CD4-positive, alpha-beta T cell (primary cell): ENCODE measurements at regions of chr9 and their contacts with region 1.

Region 1: GRCh38 chr9:37784616-37785483 is at the start of gene EXOSC3:
- DNase-seq: peak; percentile 73 to 93 (median 80)
- ATAC-seq: peak; percentile 91
- H3K4me3 ChIP-seq: peak within 1 kb of the TSS; percentile 94
- H3K4me3 Mint-ChIP-seq: peak within 1 kb of the TSS; percentile 98
- H3K27ac ChIP-seq: peak within 1 kb of the TSS; percentile 79 to 90
- H3K27ac Mint-ChIP-seq: peak within 1 kb of the TSS; percentile 95
- H3K4me1 ChIP-seq: peaks cover 23% of the 10 kb centered on the region
- H3K4me1 Mint-ChIP-seq: peaks cover 48% of the 10 kb centered on the region
- H3K27me3 ChIP-seq: no peaks in the 10 kb centered on the region
- H3K27me3 Mint-ChIP-seq: no peaks in the 10 kb centered on the region
- CTCF ChIP-seq: no peak
- total RNA-seq, gene EXOSC3: 42.9 to 44.2 TPM

Region 2: GRCh38 chr9:37119907-37120842 is 664.7 kb before region 1 on chr9 and contains the start of gene ZCCHC7:
- CTCF ChIA-PET with region 1: no interaction called
- POLR2A ChIA-PET with region 1: no interaction called
- intact Hi-C with region 1: no loop called
- DNase-seq: peak; percentile 95 to 98 (median 97)
- ATAC-seq: peak; percentile 95
- H3K4me3 ChIP-seq: peak within 1 kb of the TSS; percentile 79
- H3K4me3 Mint-ChIP-seq: peak within 1 kb of the TSS; percentile 95
- H3K27ac ChIP-seq: peak within 1 kb of the TSS; percentile 87 to 94
- H3K27ac Mint-ChIP-seq: peak within 1 kb of the TSS; percentile 92
- H3K4me1 ChIP-seq: peaks cover 21% of the 10 kb centered on the region
- H3K4me1 Mint-ChIP-seq: peaks cover 42% of the 10 kb centered on the region
- H3K27me3 ChIP-seq: no peaks in the 10 kb centered on the region
- H3K27me3 Mint-ChIP-seq: no peaks in the 10 kb centered on the region
- CTCF ChIP-seq: no peak
- total RNA-seq, gene ZCCHC7: 40.7 to 41.0 TPM

Region 3: DNA sequence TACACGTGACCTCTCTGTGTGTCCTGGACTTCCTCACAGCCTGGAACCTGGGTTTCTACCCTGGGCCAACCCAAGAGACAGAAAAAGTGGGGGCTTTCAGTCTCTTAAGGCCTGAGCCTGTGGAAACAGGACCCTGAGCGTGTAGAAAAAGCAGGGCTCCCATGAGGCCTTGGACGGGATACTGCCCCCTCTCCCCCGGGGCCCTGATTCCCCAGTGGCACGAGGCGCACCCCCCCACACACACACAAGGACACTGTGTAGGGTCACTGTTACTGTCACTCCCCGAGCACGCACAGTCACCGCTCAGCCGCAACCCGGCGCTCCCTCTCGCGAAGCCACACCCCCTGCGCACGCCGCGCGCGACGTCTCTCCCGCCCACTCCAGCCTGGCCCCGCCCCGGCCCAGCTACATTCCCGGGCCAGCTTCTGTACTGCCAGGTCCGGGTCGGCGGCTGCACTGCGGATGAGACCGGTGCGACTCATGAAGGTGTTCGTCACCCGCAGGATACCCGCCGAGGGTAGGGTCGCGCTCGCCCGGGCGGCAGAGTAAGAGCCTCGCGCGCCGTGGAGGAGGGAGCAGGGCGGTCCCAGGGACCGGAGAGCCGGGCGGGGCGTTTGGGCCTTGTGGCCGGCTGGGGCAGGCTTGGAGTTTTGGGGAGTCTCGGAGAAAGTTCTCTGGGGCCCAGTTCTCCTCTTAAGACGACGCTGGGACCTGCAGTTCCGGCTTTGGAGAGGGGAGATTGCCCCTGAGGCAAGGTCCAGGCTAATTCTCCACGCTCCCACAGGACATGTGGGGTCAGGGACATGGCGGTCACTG is 362.4 kb before region 1 on chr9 and contains the start of gene GRHPR:
- CTCF ChIA-PET with region 1: no interaction called
- POLR2A ChIA-PET with region 1: no interaction called
- intact Hi-C with region 1: loop called in 1 of 2 experiments (anchors 5 kb)
- DNase-seq: peak; percentile 80 to 95 (median 88)
- ATAC-seq: peak; percentile 99
- H3K4me3 ChIP-seq: peak within 1 kb of the TSS; percentile 86
- H3K4me3 Mint-ChIP-seq: peak within 1 kb of the TSS; percentile 96
- H3K27ac ChIP-seq: peak within 1 kb of the TSS; percentile 73 to 80
- H3K27ac Mint-ChIP-seq: peak within 1 kb of the TSS; percentile 90
- H3K4me1 ChIP-seq: peaks cover 34% of the 10 kb centered on the region
- H3K4me1 Mint-ChIP-seq: peaks cover 28% of the 10 kb centered on the region
- H3K27me3 ChIP-seq: no peaks in the 10 kb centered on the region
- H3K27me3 Mint-ChIP-seq: no peaks in the 10 kb centered on the region
- CTCF ChIP-seq: no peak
- total RNA-seq, gene GRHPR: 29.0 to 29.6 TPM

Region 4: DNA sequence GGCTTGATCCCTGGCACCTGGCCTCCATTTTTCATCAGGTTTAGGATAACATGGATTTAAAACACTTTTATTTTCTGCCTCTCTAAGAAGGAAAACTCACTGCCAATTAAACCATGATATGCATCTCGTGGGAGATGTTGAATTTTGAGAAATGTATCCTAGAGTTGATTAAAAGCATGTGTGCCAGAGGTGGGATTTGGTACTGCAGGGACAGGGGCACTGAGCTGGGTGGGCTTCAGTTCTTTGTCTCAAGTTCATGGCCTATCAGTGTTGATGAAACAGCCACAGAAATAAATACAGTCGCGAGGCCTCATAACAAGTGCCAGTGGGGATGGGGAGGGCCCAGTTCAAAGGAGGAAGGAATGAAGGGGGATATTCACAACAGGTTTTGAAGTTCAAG is 264.2 kb before region 1 on chr9:
- CTCF ChIA-PET with region 1: no interaction called
- POLR2A ChIA-PET with region 1: no interaction called
- intact Hi-C with region 1: no loop called
- DNase-seq: no peak
- ATAC-seq: no peak
- H3K4me3 ChIP-seq: no peak overlapping the region
- H3K4me3 Mint-ChIP-seq: no peak overlapping the region
- H3K27ac ChIP-seq: no peak overlapping the region
- H3K27ac Mint-ChIP-seq: no peak overlapping the region
- H3K4me1 ChIP-seq: no peaks in the 10 kb centered on the region
- H3K4me1 Mint-ChIP-seq: no peaks in the 10 kb centered on the region
- H3K27me3 ChIP-seq: no peaks in the 10 kb centered on the region
- H3K27me3 Mint-ChIP-seq: no peaks in the 10 kb centered on the region
- CTCF ChIP-seq: no peak

Region 5: DNA sequence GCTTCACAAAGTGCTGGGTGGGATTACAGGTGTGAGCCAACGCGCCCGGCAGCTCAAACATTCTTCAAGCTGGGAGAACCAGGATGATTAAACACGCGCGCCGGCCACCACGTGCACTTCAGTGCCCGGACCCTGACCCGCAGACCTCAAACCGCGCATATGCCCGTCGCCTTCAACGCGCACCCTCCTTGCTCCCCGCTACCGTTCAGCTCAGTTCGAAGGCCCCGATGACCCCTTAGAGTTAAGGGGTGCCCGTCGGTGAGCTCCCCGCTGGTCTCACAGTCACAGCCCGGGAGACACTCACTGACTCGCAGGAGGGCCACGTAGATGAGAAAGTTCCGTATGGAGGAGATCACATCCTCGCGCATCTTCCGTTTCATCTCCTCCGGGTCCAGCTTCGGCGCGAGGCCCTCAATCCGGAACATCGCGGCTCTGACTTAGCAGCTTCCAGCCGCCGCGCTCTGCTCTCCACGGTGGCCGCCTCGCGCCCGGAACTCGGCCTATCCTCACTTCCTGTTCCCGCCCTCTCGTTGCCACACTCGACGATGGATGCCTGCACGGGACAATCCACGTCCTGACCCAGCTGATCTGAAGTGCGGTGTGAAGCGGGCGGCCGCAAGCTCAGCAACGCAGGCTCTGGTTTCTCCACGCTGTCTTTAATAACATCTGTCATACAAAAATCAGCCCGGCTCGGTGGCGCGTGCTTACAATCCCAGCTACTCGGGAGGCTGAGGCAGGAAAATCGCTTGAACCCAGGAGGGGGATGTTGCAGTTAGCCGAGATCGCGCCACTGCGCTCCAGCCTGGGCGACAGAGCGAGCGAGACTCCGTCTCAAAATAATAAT is 192.5 kb before region 1 on chr9 and contains the start of gene TOMM5:
- CTCF ChIA-PET with region 1: interaction called, 3 read pairs
- POLR2A ChIA-PET with region 1: interaction called, 3 read pairs
- intact Hi-C with region 1: loop called in 1 of 2 experiments (anchors 5 kb)
- DNase-seq: peak; percentile 83 to 95 (median 86)
- ATAC-seq: peak; percentile 94
- H3K4me3 ChIP-seq: peak within 1 kb of the TSS; percentile 100
- H3K4me3 Mint-ChIP-seq: peak within 1 kb of the TSS; percentile 99
- H3K27ac ChIP-seq: peak within 1 kb of the TSS in 1 of 2 donors; percentile 64
- H3K27ac Mint-ChIP-seq: peak within 1 kb of the TSS; percentile 92
- H3K4me1 ChIP-seq: peaks cover 33% of the 10 kb centered on the region
- H3K4me1 Mint-ChIP-seq: peaks cover 50% of the 10 kb centered on the region
- H3K27me3 ChIP-seq: peaks cover 7% of the 10 kb centered on the region in 2 experiments
- H3K27me3 Mint-ChIP-seq: peaks cover 12% of the 10 kb centered on the region
- CTCF ChIP-seq: no peak
- total RNA-seq, gene TOMM5: 31.4 to 35.3 TPM

Region 6: DNA sequence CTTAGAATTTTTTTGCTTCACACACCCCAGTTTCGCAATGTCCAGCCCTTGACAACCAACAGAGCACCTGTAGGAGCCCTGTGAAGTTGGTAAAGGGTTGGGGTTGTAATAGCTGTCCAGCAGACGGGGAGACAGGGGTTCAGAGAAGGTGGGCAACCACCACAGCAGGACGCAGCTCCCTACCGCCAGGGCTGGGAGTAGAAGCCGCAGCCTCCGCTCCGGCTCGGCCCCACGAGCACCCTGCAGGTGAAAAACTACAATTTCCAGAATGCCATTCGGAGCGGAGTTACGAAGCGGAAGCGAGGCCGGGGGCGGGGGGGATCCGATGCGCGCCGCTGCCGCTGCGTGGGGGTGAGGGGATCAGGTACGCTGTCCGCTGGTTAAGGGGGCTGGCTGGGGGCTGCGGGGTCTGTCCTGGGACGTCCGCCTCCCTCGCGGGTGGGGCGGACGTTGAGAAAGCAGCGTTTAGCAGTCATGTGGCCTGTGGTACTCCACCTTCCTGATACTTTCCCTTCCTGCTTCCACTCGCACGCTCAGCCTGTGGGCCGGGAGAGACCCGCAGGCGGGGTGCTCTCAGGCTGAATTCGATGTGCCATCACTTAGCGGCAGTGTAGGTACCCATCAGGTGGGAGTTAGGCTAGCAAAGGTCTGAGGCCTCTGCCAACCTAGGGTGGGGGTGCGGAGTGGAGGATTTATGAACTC is 31.2 kb before region 1 on chr9 and contains the start of gene TRMT10B:
- CTCF ChIA-PET with region 1: no interaction called
- POLR2A ChIA-PET with region 1: no interaction called
- intact Hi-C with region 1: loop called in 1 of 2 experiments (anchors 1 kb)
- DNase-seq: peak; percentile 50 to 85 (median 62)
- ATAC-seq: peak; percentile 93
- H3K4me3 ChIP-seq: peak within 1 kb of the TSS; percentile 97
- H3K4me3 Mint-ChIP-seq: peak within 1 kb of the TSS; percentile 93
- H3K27ac ChIP-seq: peak within 1 kb of the TSS; percentile 69 to 78
- H3K27ac Mint-ChIP-seq: peak within 1 kb of the TSS; percentile 88
- H3K4me1 ChIP-seq: peaks cover 18% of the 10 kb centered on the region
- H3K4me1 Mint-ChIP-seq: peaks cover 33% of the 10 kb centered on the region
- H3K27me3 ChIP-seq: no peaks in the 10 kb centered on the region
- H3K27me3 Mint-ChIP-seq: no peaks in the 10 kb centered on the region
- CTCF ChIP-seq: no peak
- total RNA-seq, gene TRMT10B: 6.6 to 8.3 TPM

Region 7: GRCh38 chr9:37800631-37801286 is 15.9 kb after region 1 on chr9 and contains the start of gene DCAF10:
- CTCF ChIA-PET with region 1: interaction called, 7 read pairs
- POLR2A ChIA-PET with region 1: interaction called, 46 read pairs
- intact Hi-C with region 1: loop called (anchors 1 kb)
- DNase-seq: peak; percentile 77 to 93 (median 86)
- ATAC-seq: peak; percentile 82
- H3K4me3 ChIP-seq: peak within 1 kb of the TSS; percentile 93
- H3K4me3 Mint-ChIP-seq: peak within 1 kb of the TSS; percentile 95
- H3K27ac ChIP-seq: peak within 1 kb of the TSS; percentile 60 to 70
- H3K27ac Mint-ChIP-seq: peak within 1 kb of the TSS; percentile 83
- H3K4me1 ChIP-seq: peaks cover 24% of the 10 kb centered on the region
- H3K4me1 Mint-ChIP-seq: peaks cover 43% of the 10 kb centered on the region
- H3K27me3 ChIP-seq: no peaks in the 10 kb centered on the region
- H3K27me3 Mint-ChIP-seq: no peaks in the 10 kb centered on the region
- CTCF ChIP-seq: no peak
- total RNA-seq, gene DCAF10: 7.2 to 7.5 TPM

Region 8: DNA sequence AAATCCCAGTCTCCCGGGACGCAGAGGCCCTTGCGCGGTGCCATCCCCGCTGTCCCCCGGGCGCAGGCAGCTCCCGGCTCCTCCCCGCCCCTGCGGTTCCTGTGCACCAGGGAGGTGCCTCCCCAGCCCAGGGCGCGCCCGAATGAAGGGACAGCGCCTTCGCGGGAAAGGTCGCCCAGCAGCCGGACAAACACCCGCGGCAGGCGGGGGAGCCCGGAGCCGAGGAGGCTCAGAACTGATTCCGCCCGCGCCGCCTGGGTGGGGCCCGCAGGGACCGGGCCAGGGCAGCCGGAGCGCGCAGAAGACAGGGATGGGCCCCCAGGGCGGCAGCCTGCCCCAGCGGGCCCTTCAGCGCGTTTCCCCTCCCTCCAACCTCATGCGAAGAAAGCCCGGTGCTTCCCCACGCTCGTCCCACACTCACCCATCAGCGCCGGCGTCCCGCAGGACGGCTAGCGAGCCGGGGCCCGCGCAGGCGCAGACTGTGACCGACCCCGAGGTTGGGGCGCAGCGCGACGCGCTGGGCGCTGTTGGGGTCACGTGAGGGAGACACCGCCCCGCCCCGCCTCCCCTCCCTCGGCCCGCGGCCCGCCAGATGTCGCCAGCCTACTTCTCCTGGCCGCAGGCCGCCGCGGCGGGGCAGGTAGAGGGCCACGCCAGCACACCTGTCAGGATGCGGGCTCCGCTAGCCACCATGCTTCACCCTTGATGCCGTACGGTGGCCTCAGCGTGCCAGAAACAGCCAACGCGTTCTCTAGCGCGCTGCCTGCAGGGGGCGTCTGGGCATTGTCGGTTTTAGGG is 119.0 kb after region 1 on chr9 and contains the start of gene SLC25A51:
- CTCF ChIA-PET with region 1: no interaction called
- POLR2A ChIA-PET with region 1: interaction called, 6 read pairs
- intact Hi-C with region 1: loop called in 1 of 2 experiments (anchors 1 kb)
- DNase-seq: peak; percentile 93 to 98 (median 95)
- ATAC-seq: peak; percentile 87
- H3K4me3 ChIP-seq: peak within 1 kb of the TSS; percentile 61
- H3K4me3 Mint-ChIP-seq: peak within 1 kb of the TSS; percentile 100
- H3K27ac ChIP-seq: peak within 1 kb of the TSS; percentile 57 to 70
- H3K27ac Mint-ChIP-seq: peak within 1 kb of the TSS; percentile 97
- H3K4me1 ChIP-seq: peaks cover 23% of the 10 kb centered on the region
- H3K4me1 Mint-ChIP-seq: peaks cover 33% of the 10 kb centered on the region
- H3K27me3 ChIP-seq: no peaks in the 10 kb centered on the region
- H3K27me3 Mint-ChIP-seq: no peaks in the 10 kb centered on the region
- CTCF ChIP-seq: peak; percentile 88
- total RNA-seq, gene SLC25A51: 13.3 to 13.8 TPM

Region 9: GRCh38 chr9:38068866-38069629 is 284.2 kb after region 1 on chr9 and contains the start of gene SHB:
- CTCF ChIA-PET with region 1: no interaction called
- POLR2A ChIA-PET with region 1: no interaction called
- intact Hi-C with region 1: loop called in 1 of 2 experiments (anchors 10 kb)
- DNase-seq: peak; percentile 60 to 94 (median 81)
- ATAC-seq: peak; percentile 77
- H3K4me3 ChIP-seq: peak within 1 kb of the TSS; percentile 67
- H3K4me3 Mint-ChIP-seq: peak within 1 kb of the TSS; percentile 87
- H3K27ac ChIP-seq: no peak within 1 kb of the TSS
- H3K27ac Mint-ChIP-seq: peak within 1 kb of the TSS; percentile 29
- H3K4me1 ChIP-seq: peaks cover 26% of the 10 kb centered on the region
- H3K4me1 Mint-ChIP-seq: peaks cover 30% of the 10 kb centered on the region
- H3K27me3 ChIP-seq: no peaks in the 10 kb centered on the region
- H3K27me3 Mint-ChIP-seq: no peaks in the 10 kb centered on the region
- CTCF ChIP-seq: peak; percentile 34
- total RNA-seq, gene SHB: 1.1 to 1.2 TPM

Region 10: DNA sequence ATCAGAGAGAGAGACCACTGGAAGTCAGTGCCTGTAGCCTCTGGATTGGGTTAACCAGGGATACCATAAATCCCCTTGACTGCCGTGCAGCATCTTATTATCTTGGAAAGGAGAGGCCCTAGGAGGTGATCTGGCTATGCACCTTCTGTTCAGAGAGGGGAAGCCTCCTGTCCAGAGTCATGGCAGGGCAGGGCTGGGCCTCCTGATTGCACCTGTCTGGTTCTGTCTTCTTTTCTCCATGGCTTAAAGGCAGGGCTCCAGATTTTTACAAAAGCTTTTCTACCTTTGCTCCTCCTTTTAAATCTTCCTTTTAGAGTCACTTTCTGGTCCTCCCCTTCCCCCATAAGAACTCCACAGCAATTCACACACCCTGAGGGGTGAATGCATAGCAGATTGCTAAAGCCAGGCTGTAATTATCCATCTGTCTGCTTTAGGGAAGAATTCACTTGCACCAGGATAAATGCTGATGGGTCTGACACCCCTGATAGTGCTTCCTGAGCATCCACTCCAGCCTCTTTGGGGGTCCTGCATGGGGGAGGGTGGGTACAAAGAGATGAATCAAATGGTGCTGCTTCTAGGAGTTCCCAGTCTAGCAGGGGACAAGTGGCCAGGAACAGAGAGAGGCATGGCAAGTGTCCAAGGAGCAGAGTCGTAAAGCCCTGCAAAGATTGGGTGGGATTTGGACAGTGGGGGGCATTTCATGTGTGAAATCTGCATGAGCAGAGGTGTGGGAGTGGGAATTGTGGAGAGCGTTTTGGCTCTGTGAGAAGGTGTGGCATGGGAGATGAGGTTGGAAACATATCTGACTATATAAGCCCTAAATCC is 466.4 kb after region 1 on chr9:
- CTCF ChIA-PET with region 1: no interaction called
- POLR2A ChIA-PET with region 1: no interaction called
- intact Hi-C with region 1: no loop called
- DNase-seq: no peak
- ATAC-seq: no peak
- H3K4me3 ChIP-seq: no peak overlapping the region
- H3K4me3 Mint-ChIP-seq: no peak overlapping the region
- H3K27ac ChIP-seq: no peak overlapping the region
- H3K27ac Mint-ChIP-seq: no peak overlapping the region
- H3K4me1 ChIP-seq: no peaks in the 10 kb centered on the region
- H3K4me1 Mint-ChIP-seq: no peaks in the 10 kb centered on the region
- H3K27me3 ChIP-seq: no peaks in the 10 kb centered on the region
- H3K27me3 Mint-ChIP-seq: no peaks in the 10 kb centered on the region
- CTCF ChIP-seq: no peak